ENCODE measurements at regions of chr12 and their contacts with region 1.

Region 1: DNA sequence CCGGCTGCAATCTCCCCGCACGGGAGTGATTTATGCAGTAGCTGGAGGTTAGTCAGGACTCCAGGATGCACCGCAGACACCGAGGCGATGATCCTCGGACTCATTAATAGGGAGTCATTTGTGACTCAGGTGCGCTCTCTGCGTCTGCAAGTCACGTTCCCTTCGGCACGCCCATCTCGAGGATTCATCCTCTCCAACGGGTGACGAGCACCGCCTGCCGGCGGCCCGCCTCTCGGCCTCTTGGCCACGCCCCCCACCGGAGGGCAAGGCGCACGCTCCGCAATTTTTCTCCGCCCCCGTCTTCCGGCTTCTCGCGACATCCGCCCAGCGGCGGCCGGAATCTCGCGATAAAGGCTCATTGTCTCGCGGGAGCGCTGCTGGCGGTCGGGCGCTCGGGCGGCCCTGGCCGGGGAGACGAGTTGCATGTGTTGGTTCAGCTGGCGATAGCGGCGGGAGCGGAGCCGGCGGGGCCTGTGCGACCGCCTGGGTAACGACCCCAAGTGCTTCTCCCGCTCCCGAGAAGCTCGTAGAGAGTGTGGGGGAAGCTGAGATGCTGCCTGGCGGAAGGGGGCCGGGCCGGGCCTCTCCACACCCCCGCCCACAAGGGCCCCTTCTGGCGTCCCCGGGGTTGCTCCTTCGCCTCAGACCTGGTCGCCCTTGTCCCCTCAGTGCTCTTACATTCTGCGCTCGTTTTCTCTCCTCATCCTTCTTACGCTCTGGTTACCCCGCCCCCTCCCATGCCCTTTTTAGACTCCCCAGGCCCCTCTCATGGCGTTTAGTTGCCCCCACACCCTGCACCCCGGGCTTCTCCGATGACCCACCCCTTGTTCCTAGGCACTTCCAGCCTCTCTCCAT is at the start of gene DENR:
- DNase-seq: peak; percentile 100
- H3K4me3 Mint-ChIP-seq: peak within 1 kb of the TSS; percentile 94
- H3K27ac Mint-ChIP-seq: peak within 1 kb of the TSS; percentile 86
- H3K4me1 Mint-ChIP-seq: peaks cover 44% of the 10 kb centered on the region
- H3K27me3 Mint-ChIP-seq: no peaks in the 10 kb centered on the region
- total RNA-seq, gene DENR: 56.9 to 58.2 TPM

Region 2: GRCh38 chr12:122584177-122584780 is 168.4 kb before region 1 on chr12:
- CTCF ChIA-PET with region 1: no interaction called
- POLR2A ChIA-PET with region 1: no interaction called
- intact Hi-C with region 1: loop called (anchors 5 kb)
- DNase-seq: no peak
- H3K4me3 Mint-ChIP-seq: no peak overlapping the region
- H3K27ac Mint-ChIP-seq: no peak overlapping the region
- H3K4me1 Mint-ChIP-seq: peaks cover 2% of the 10 kb centered on the region
- H3K27me3 Mint-ChIP-seq: no peaks in the 10 kb centered on the region

Region 3: GRCh38 chr12:122646517-122647217 is 106.0 kb before region 1 on chr12:
- CTCF ChIA-PET with region 1: no interaction called
- POLR2A ChIA-PET with region 1: no interaction called
- intact Hi-C with region 1: loop called (anchors 2 kb)
- DNase-seq: peak; percentile 80
- H3K4me3 Mint-ChIP-seq: peak overlapping the region; percentile 47
- H3K27ac Mint-ChIP-seq: peak overlapping the region; percentile 14
- H3K4me1 Mint-ChIP-seq: peaks cover 14% of the 10 kb centered on the region
- H3K27me3 Mint-ChIP-seq: no peaks in the 10 kb centered on the region

Region 4: GRCh38 chr12:122767691-122768090 is 15.0 kb after region 1 on chr12:
- CTCF ChIA-PET with region 1: no interaction called
- POLR2A ChIA-PET with region 1: no interaction called
- intact Hi-C with region 1: no loop called
- DNase-seq: no peak
- H3K4me3 Mint-ChIP-seq: no peak overlapping the region
- H3K27ac Mint-ChIP-seq: peak overlapping the region; percentile 24
- H3K4me1 Mint-ChIP-seq: no peaks in the 10 kb centered on the region
- H3K27me3 Mint-ChIP-seq: no peaks in the 10 kb centered on the region

Region 5: GRCh38 chr12:122851820-122852219 is 99.1 kb after region 1 on chr12:
- CTCF ChIA-PET with region 1: no interaction called
- POLR2A ChIA-PET with region 1: no interaction called
- intact Hi-C with region 1: no loop called
- DNase-seq: no peak
- H3K4me3 Mint-ChIP-seq: no peak overlapping the region
- H3K27ac Mint-ChIP-seq: no peak overlapping the region
- H3K4me1 Mint-ChIP-seq: no peaks in the 10 kb centered on the region
- H3K27me3 Mint-ChIP-seq: no peaks in the 10 kb centered on the region

Measured in activated CD4-positive, alpha-beta memory T cell treated with anti-CD3 and anti-CD28 coated beads for 36 hours (primary cell).